MCF 10A (cell line): ENCODE measurements at regions of chr4 and their contacts with region 1.

Region 1: DNA sequence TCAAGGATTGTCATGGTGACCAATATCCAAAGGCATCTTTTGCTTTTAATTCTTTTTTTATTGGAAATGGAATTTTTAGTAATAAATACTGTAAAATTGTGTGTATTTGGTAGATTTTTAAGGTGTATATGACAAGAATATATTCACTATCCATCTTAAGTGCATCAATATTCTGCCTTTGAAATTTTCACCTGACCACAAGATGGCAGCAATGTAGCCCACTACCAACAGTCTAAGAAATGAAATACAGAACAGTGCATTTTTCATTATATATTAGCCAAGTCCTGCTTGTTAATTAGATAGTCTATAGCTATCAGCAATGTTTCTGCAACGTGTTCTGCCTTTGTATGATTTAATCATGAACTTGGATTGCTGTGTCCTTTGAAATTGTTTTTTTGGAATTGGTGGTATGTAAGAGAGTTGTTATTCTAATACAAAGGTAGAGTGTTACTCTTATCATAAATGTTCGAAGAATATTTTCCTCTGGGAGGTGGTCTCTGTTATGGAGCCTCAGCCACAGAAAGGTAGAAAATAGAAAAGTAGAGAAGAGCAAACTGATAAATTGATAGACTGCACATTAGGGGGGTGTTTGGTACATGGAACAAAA is 38.2 kb downstream of the HPGDS start:
- DNase-seq: peak; percentile 46
- H3K4me3 Mint-ChIP-seq: no peak overlapping the region
- H3K27ac Mint-ChIP-seq: no peak overlapping the region
- H3K4me1 Mint-ChIP-seq: peaks cover 4% of the 10 kb centered on the region
- H3K27me3 Mint-ChIP-seq: no peaks in the 10 kb centered on the region
- CTCF ChIP-seq: peak; percentile 51

Region 2: DNA sequence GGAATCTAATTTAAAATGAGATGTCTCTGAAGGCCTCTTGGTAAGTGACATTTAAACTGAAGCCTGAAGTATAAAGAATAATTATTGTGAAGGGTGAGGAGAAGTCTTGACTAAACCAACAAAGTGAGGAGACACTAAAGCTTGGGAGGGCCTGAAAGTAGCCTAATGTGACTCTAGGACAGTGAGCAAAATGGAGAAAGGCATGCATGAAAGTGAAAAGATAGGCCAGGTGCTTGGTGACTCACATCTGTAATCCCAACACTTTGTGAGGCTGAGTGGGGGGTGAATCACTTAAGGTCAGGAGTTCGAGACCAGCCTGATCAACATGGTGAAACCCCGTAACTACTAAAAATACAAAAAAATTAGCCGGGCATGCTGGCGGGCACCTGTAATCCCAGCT is 143.7 kb before region 1 on chr4:
- CTCF ChIA-PET with region 1: no interaction called
- POLR2A ChIA-PET with region 1: no interaction called
- intact Hi-C with region 1: no loop called
- DNase-seq: peak; percentile 13
- H3K4me3 Mint-ChIP-seq: no peak overlapping the region
- H3K27ac Mint-ChIP-seq: no peak overlapping the region
- H3K4me1 Mint-ChIP-seq: no peaks in the 10 kb centered on the region
- H3K27me3 Mint-ChIP-seq: no peaks in the 10 kb centered on the region
- CTCF ChIP-seq: no peak

Region 3: DNA sequence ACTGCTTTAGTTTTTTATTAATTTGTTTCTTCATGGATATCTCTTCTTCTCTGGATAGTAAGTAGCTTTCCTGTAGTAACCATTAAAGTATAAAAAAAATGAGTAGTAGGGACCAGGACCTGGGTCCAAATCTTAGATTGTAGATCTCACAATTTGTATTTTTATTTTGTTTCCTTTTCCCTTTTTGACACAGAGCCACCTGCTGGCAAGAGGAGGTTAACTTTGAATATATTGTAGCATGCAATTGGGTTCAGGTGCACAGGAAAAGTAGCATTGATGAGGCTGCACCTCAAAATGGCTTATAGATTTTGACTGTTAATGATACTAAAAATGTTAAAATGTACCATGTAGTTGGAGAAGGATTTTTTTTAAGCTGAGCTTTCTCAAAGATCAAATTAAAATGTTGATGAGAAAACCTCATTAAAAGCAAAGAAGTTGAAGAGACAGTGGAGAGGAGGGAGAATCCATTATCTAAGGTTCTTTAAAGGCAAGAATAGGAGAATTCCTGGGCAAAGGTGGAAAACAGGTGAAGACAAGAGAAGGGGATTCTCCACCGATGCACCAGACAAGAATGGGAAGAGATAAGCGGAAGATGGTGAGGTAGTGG is 86.4 kb after region 1 on chr4:
- CTCF ChIA-PET with region 1: interaction called, 87 read pairs
- POLR2A ChIA-PET with region 1: interaction called, 6 read pairs
- intact Hi-C with region 1: loop called (anchors 1 kb)
- DNase-seq: peak; percentile 41
- H3K4me3 Mint-ChIP-seq: no peak overlapping the region
- H3K27ac Mint-ChIP-seq: no peak overlapping the region
- H3K4me1 Mint-ChIP-seq: peaks cover 5% of the 10 kb centered on the region
- H3K27me3 Mint-ChIP-seq: peaks cover 22% of the 10 kb centered on the region
- CTCF ChIP-seq: peak; percentile 49

Region 4: GRCh38 chr4:94595879-94596483 is 291.5 kb after region 1 on chr4:
- CTCF ChIA-PET with region 1: interaction called, 4 read pairs
- POLR2A ChIA-PET with region 1: interaction called, 4 read pairs
- intact Hi-C with region 1: loop called (anchors 1 kb)
- DNase-seq: peak; percentile 63
- H3K4me3 Mint-ChIP-seq: no peak overlapping the region
- H3K27ac Mint-ChIP-seq: no peak overlapping the region
- H3K4me1 Mint-ChIP-seq: peaks cover 5% of the 10 kb centered on the region
- H3K27me3 Mint-ChIP-seq: no peaks in the 10 kb centered on the region
- CTCF ChIP-seq: peak; percentile 66

Region 5: GRCh38 chr4:94732358-94732698 is 427.9 kb after region 1 on chr4:
- CTCF ChIA-PET with region 1: interaction called, 4 read pairs
- POLR2A ChIA-PET with region 1: no interaction called
- intact Hi-C with region 1: loop called (anchors 10 kb)
- DNase-seq: no peak
- H3K4me3 Mint-ChIP-seq: no peak overlapping the region
- H3K27ac Mint-ChIP-seq: no peak overlapping the region
- H3K4me1 Mint-ChIP-seq: no peaks in the 10 kb centered on the region
- H3K27me3 Mint-ChIP-seq: no peaks in the 10 kb centered on the region
- CTCF ChIP-seq: no peak

Region 6: DNA sequence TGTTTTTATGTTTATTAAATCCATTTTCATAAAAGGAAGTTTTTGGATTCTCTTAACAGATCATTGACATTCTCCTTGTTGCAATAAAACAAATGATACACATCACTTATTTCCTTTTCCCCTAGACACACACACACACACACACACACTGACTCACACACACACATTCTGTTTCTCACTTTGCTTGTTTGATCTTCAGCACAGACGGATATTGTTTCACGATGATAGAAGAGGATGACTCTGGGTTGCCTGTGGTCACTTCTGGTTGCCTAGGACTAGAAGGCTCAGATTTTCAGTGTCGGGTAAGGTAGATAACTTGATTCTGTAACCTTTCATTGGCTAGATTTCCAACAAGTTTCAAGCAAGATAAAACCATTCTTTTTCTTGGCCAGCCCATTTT is 810.1 kb after region 1 on chr4:
- CTCF ChIA-PET with region 1: no interaction called
- POLR2A ChIA-PET with region 1: no interaction called
- intact Hi-C with region 1: loop called (anchors 10 kb)
- DNase-seq: no peak
- H3K4me3 Mint-ChIP-seq: no peak overlapping the region
- H3K27ac Mint-ChIP-seq: no peak overlapping the region
- H3K4me1 Mint-ChIP-seq: no peaks in the 10 kb centered on the region
- H3K27me3 Mint-ChIP-seq: no peaks in the 10 kb centered on the region
- CTCF ChIP-seq: no peak